CD8-positive, alpha-beta T cell (primary cell): ENCODE measurements at regions of chr3 and their contacts with region 1.

Region 1: GRCh38 chr3:115169808-115170207 is 22.7 kb upstream of the ZBTB20 start:
- DNase-seq: peak in 1 of 9 experiments; percentile 32
- ATAC-seq: no peak
- H3K4me3 ChIP-seq: no peak overlapping the region
- H3K4me3 Mint-ChIP-seq: no peak overlapping the region
- H3K27ac ChIP-seq: no peak overlapping the region
- H3K27ac Mint-ChIP-seq: no peak overlapping the region
- H3K4me1 ChIP-seq: peaks cover 11% of the 10 kb centered on the region
- H3K4me1 Mint-ChIP-seq: peaks cover 12% of the 10 kb centered on the region
- H3K27me3 ChIP-seq: no peaks in the 10 kb centered on the region
- H3K27me3 Mint-ChIP-seq: no peaks in the 10 kb centered on the region
- CTCF ChIP-seq: peak; percentile 59

Region 2: GRCh38 chr3:114383875-114384557 is 785.8 kb before region 1 on chr3:
- CTCF ChIA-PET with region 1: interaction called, 4 read pairs
- POLR2A ChIA-PET with region 1: no interaction called
- intact Hi-C with region 1: loop called in 1 of 2 experiments (anchors 1 kb)
- DNase-seq: peak; percentile 34 to 78 (median 65)
- ATAC-seq: peak; percentile 97
- H3K4me3 ChIP-seq: peak overlapping the region; percentile 30 to 44
- H3K4me3 Mint-ChIP-seq: peak overlapping the region; percentile 82
- H3K27ac ChIP-seq: peak overlapping the region in 1 of 2 experiments; percentile 43
- H3K27ac Mint-ChIP-seq: peak overlapping the region; percentile 82
- H3K4me1 ChIP-seq: peaks cover 6% of the 10 kb centered on the region
- H3K4me1 Mint-ChIP-seq: peaks cover 18% of the 10 kb centered on the region
- H3K27me3 ChIP-seq: no peaks in the 10 kb centered on the region
- H3K27me3 Mint-ChIP-seq: no peaks in the 10 kb centered on the region
- CTCF ChIP-seq: peak; percentile 91

Region 3: DNA sequence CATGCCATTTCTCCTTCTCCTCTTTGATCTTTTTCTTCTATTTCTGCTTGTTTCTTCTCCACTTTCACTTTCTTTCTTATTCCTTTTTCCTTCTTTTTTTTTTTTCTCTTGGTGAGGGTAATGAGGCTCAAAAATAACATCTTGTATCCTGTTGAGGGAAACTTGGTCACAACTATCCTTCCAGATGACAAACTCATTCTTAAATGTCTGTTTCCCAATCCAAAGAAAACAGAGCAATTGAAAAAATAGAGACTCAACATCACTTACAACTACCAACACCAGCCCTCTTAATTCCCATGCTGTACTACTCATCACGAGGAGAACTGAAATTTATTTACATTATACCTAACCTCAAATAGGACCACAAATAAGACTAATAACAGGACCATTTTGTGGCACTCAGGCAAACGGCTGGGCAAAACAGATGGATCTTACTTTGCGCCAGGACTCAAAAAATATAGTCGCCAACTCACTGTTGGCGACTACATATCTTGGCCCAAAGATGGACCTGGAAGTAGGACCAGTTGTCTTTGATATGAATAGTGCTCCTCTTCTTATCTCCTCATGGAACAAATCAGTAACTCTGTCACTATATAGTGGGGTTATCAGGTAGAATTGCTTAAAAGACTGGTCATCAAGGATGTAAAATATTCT is 366.6 kb before region 1 on chr3:
- CTCF ChIA-PET with region 1: no interaction called
- POLR2A ChIA-PET with region 1: no interaction called
- intact Hi-C with region 1: no loop called
- DNase-seq: no peak
- ATAC-seq: no peak
- H3K4me3 ChIP-seq: no peak overlapping the region
- H3K4me3 Mint-ChIP-seq: no peak overlapping the region
- H3K27ac ChIP-seq: no peak overlapping the region
- H3K27ac Mint-ChIP-seq: no peak overlapping the region
- H3K4me1 ChIP-seq: no peaks in the 10 kb centered on the region
- H3K4me1 Mint-ChIP-seq: peaks cover 20% of the 10 kb centered on the region
- H3K27me3 ChIP-seq: no peaks in the 10 kb centered on the region
- H3K27me3 Mint-ChIP-seq: no peaks in the 10 kb centered on the region
- CTCF ChIP-seq: no peak

Region 4: DNA sequence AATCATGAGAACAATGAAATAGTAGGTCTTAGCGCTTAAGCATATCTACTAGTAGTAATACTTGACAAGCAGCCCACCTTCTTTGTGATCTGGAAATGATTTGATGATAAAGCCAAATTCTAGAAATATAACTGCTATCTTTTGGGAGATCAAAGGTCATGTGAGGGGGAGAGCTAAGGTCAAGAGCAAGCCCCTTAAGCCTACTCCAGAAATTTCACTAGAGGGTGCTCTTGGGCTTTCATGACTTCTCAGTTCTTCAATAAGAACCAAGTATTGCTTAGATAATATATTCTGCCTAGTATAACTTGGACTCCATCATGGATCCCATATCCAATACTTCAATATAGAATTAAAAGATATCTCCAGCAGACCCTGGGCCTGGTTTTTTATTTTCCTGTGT is 342.3 kb before region 1 on chr3:
- CTCF ChIA-PET with region 1: interaction called, 3 read pairs
- POLR2A ChIA-PET with region 1: no interaction called
- intact Hi-C with region 1: loop called (anchors 1 to 5 kb)
- DNase-seq: peak in 2 of 9 experiments; percentile 43 to 54
- ATAC-seq: no peak
- H3K4me3 ChIP-seq: no peak overlapping the region
- H3K4me3 Mint-ChIP-seq: no peak overlapping the region
- H3K27ac ChIP-seq: no peak overlapping the region
- H3K27ac Mint-ChIP-seq: no peak overlapping the region
- H3K4me1 ChIP-seq: no peaks in the 10 kb centered on the region
- H3K4me1 Mint-ChIP-seq: peaks cover 10% of the 10 kb centered on the region
- H3K27me3 ChIP-seq: no peaks in the 10 kb centered on the region
- H3K27me3 Mint-ChIP-seq: no peaks in the 10 kb centered on the region
- CTCF ChIP-seq: peak; percentile 22

Region 5: DNA sequence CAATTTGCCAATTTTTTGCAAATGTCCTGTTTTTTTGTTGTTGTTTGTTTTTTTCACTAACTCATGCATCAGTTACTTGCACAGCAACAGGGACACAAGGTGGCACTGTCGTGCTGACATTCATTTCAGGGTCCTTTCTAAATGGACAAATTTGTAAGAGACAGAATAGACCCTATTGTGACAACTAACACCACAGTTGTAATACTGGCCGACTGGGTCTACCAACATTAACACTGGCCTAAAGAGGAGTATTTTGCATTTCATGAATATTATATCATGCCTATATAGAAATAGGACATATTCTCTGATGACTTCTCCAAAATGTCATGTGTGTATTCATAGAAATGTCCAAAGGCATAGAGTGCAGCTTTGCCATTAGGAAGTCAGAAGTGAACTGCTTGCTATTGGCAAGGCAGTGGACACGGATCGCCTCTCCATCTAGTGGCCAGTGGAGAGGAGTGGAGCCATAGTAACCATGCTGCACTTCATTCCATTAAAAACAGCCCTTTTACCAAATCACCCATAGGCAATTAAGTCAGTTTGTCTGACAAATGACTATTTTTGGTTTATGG is 77.5 kb before region 1 on chr3:
- CTCF ChIA-PET with region 1: interaction called, 124 read pairs
- POLR2A ChIA-PET with region 1: interaction called, 4 read pairs
- intact Hi-C with region 1: loop called (anchors 1 kb)
- DNase-seq: peak; percentile 32 to 77 (median 65)
- ATAC-seq: peak; percentile 72
- H3K4me3 ChIP-seq: no peak overlapping the region
- H3K4me3 Mint-ChIP-seq: no peak overlapping the region
- H3K27ac ChIP-seq: no peak overlapping the region
- H3K27ac Mint-ChIP-seq: peak overlapping the region; percentile 8
- H3K4me1 ChIP-seq: no peaks in the 10 kb centered on the region
- H3K4me1 Mint-ChIP-seq: peaks cover 50% of the 10 kb centered on the region
- H3K27me3 ChIP-seq: no peaks in the 10 kb centered on the region
- H3K27me3 Mint-ChIP-seq: no peaks in the 10 kb centered on the region
- CTCF ChIP-seq: peak; percentile 89

Region 6: DNA sequence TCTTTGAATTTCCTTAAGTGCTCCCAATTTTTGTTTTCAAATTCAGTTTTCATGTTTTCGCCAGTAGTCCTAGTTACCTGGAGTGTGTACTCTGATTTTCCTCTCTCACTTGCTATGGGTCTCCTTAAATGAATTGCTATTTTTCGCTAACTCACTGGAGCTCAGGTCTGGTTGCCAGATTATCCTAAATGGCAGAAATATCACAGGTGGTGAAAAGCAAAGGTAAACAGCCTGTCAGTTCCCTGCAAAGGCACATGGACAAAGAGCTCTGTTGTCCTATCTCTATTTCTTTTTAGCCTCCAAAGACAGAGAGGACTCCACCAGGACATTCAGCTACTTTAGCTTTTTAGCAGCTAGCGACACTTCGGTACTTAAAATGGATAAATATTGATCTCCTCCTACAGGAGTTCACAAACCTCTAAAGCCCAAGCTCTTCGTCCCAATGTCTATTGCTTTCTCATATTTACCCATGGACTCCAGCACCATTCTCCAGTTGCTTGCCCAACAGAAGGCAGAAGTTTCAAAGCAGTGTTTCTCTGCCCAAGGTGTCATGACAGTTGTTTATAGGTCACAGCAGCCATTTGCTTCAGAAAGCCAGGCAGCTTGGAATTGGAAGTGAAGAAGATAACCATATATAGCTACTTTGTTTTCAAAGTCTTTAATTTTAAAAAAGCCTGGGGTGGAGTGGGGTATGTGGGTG is 35.0 kb before region 1 on chr3:
- CTCF ChIA-PET with region 1: no interaction called
- POLR2A ChIA-PET with region 1: no interaction called
- intact Hi-C with region 1: no loop called
- DNase-seq: no peak
- ATAC-seq: no peak
- H3K4me3 ChIP-seq: no peak overlapping the region
- H3K4me3 Mint-ChIP-seq: no peak overlapping the region
- H3K27ac ChIP-seq: no peak overlapping the region
- H3K27ac Mint-ChIP-seq: no peak overlapping the region
- H3K4me1 ChIP-seq: no peaks in the 10 kb centered on the region
- H3K4me1 Mint-ChIP-seq: peaks cover 13% of the 10 kb centered on the region
- H3K27me3 ChIP-seq: no peaks in the 10 kb centered on the region
- H3K27me3 Mint-ChIP-seq: no peaks in the 10 kb centered on the region
- CTCF ChIP-seq: no peak

Region 7: GRCh38 chr3:115436767-115437301 is 267.0 kb after region 1 on chr3:
- CTCF ChIA-PET with region 1: no interaction called
- POLR2A ChIA-PET with region 1: no interaction called
- intact Hi-C with region 1: no loop called
- DNase-seq: no peak
- ATAC-seq: no peak
- H3K4me3 ChIP-seq: no peak overlapping the region
- H3K4me3 Mint-ChIP-seq: no peak overlapping the region
- H3K27ac ChIP-seq: no peak overlapping the region
- H3K27ac Mint-ChIP-seq: no peak overlapping the region
- H3K4me1 ChIP-seq: no peaks in the 10 kb centered on the region
- H3K4me1 Mint-ChIP-seq: no peaks in the 10 kb centered on the region
- H3K27me3 ChIP-seq: no peaks in the 10 kb centered on the region
- H3K27me3 Mint-ChIP-seq: no peaks in the 10 kb centered on the region
- CTCF ChIP-seq: no peak

Region 8: DNA sequence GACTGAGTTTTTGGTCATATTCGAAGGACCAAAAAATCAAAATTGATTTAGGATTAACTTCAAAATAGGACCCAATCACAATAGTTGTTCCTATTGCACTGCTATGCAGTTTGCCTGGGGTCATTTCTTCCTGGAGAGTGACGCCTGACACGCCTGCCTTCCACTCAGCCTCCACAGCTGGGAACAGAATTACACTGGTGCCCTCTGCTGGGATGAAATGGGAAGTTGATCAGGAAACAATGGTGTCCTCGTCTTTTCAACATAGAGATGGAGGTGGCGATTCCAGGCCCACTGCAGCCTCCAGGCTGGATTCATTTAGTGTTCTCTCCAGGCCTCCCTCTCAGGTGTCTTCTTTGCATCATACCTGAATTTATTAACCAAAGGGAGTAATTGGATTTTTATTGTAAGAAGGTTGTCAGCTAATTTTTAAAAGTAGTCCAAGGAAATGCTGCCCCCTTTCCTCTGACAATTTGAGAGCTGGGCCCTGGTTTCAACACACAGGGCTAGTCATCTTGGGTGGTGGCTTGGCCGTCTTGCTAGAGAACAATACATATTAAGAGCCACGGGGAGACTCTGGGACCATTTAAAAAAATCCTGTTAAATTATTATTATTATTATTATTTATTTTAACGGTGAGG is 523.2 kb after region 1 on chr3:
- CTCF ChIA-PET with region 1: interaction called, 3 read pairs
- POLR2A ChIA-PET with region 1: no interaction called
- intact Hi-C with region 1: loop called (anchors 1 to 5 kb)
- DNase-seq: peak; percentile 37 to 77 (median 67)
- ATAC-seq: peak; percentile 88
- H3K4me3 ChIP-seq: no peak overlapping the region
- H3K4me3 Mint-ChIP-seq: no peak overlapping the region
- H3K27ac ChIP-seq: no peak overlapping the region
- H3K27ac Mint-ChIP-seq: no peak overlapping the region
- H3K4me1 ChIP-seq: no peaks in the 10 kb centered on the region
- H3K4me1 Mint-ChIP-seq: peaks cover 3% of the 10 kb centered on the region
- H3K27me3 ChIP-seq: no peaks in the 10 kb centered on the region
- H3K27me3 Mint-ChIP-seq: peaks cover 3% of the 10 kb centered on the region
- CTCF ChIP-seq: peak; percentile 69